PC-9 (cell line): ENCODE measurements at regions of chr20 and their contacts with region 1.

Region 1: DNA sequence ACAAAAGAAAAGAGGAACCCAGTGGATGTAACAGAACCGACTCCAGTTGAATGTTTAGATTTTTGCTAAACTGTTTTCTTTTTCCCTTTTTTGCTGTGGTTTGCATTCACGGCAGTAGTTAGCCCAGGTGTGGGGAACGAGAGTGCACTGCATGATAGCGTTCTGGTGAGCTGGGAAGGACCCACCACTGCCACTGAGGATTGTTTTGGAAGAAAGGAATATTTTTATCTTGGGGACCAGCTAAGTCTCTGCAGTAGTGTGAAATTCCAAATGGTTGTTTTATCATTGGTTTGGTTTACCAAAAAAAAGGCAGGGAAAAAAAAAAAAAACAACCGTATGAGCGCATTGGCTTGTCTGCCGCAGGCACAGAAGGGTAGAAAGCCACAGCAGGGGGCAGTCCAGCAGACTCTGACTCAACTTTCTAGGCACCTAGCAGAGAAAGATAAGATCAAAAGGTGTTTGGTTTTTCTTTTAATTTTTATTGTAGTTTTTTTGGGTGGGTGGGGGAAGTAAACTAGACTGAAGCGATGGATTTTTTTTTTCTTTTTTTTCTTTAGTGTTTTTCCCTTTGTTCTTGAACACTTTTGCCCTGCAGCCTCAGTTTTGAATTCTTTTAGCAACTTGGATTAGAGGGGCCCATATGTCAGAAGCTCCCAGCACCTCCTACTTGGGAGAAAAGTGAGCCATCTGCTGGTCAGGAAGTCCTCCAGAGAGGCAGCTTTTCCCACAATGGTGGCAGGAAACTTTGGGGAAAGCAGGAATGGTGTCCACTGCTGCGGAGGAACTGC is 13.5 kb upstream of the RAB5IF start:
- DNase-seq: peak in 1 of 2 experiments; percentile 61
- H3K4me3 ChIP-seq: no peak overlapping the region
- H3K27ac ChIP-seq: no peak overlapping the region
- H3K4me1 ChIP-seq: no peaks in the 10 kb centered on the region
- H3K27me3 ChIP-seq: no peaks in the 10 kb centered on the region
- CTCF ChIP-seq: peak; percentile 43; the same call in 1 of the 2 replicates

Region 2: GRCh38 chr20:36528256-36529111 is 63.6 kb before region 1 on chr20:
- CTCF ChIA-PET with region 1: no interaction called
- POLR2A ChIA-PET with region 1: no interaction called
- intact Hi-C with region 1: no loop called
- DNase-seq: no peak
- H3K4me3 ChIP-seq: no peak overlapping the region
- H3K27ac ChIP-seq: no peak overlapping the region
- H3K4me1 ChIP-seq: no peaks in the 10 kb centered on the region
- H3K27me3 ChIP-seq: no peaks in the 10 kb centered on the region
- CTCF ChIP-seq: no peak

Region 3: DNA sequence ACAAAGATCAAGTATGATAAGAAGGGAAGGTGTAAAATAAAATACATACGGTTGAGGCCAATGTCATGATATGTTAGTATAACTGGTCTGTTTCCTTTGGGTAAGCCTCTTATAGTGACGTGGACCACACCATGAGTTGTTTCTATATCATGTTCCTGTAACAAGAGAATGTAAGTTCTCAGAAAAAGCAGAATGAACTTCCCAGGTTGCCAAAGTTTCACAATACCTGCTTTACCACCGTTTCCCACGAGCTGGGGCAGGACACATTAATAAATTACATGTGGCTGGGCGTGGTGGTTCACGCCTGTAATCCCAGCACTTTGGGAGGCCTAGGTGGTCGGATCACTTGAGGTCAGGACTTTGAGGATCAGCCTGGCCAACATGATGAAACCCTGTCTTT is 96.6 kb after region 1 on chr20:
- CTCF ChIA-PET with region 1: interaction called, 12 read pairs
- POLR2A ChIA-PET with region 1: no interaction called
- intact Hi-C with region 1: no loop called
- DNase-seq: no peak
- H3K4me3 ChIP-seq: no peak overlapping the region
- H3K27ac ChIP-seq: no peak overlapping the region
- H3K4me1 ChIP-seq: no peaks in the 10 kb centered on the region
- H3K27me3 ChIP-seq: no peaks in the 10 kb centered on the region
- CTCF ChIP-seq: no peak